Naive thymus-derived CD4-positive, alpha-beta T cell (primary cell): ENCODE measurements at regions of chr19 and their contacts with region 1.

Region 1: DNA sequence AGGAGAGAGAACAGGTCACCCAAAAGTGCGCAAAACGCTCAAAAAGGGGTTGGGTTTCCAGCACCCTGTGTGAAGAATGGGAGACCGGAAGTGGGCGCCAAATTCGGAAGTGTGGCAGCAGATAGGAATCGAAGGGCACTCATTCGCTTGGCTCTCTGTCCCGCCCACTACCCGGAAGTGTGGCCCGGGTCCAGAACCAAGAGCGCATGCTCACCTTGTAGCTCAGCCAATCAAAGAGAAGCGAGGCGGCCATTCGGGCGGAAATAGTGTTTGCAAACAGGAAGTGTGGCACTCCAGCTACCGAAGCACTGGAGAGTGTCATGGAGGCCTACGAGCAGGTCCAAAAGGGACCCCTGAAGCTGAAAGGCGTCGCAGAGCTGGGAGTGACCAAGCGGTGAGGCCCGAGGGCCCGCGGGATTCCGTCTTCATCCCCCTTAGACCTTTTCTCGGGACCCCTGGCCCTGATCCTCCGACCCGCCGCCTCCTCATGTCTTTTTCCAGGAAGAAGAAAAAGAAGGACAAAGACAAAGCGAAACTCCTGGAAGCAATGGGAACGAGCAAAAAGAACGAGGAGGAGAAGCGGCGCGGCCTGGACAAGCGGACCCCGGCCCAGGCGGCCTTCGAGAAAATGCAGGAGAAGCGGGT is at the start of gene FAM32A:
- DNase-seq: peak; percentile 91 to 99 (median 99)
- ATAC-seq: peak; percentile 96
- H3K4me3 ChIP-seq: peak within 1 kb of the TSS; percentile 97
- H3K4me3 Mint-ChIP-seq: peak within 1 kb of the TSS; percentile 90 to 100 (median 99)
- H3K27ac ChIP-seq: peak within 1 kb of the TSS; percentile 87
- H3K27ac Mint-ChIP-seq: peak within 1 kb of the TSS; percentile 94 to 100 (median 96)
- H3K4me1 ChIP-seq: peaks cover 13 to 16% of the 10 kb centered on the region in 2 donors
- H3K4me1 Mint-ChIP-seq: peaks cover 9 to 46% (median 36%) of the 10 kb centered on the region in 7 donors
- H3K27me3 ChIP-seq: peaks cover 0 to 4% of the 10 kb centered on the region in 2 donors
- H3K27me3 Mint-ChIP-seq: peaks cover 0 to 2% (median 0%) of the 10 kb centered on the region in 5 donors
- total RNA-seq, gene FAM32A: 45.9 to 69.4 (median 65.9) TPM

Region 2: GRCh38 chr19:15836595-15837337 is 348.5 kb before region 1 on chr19:
- CTCF ChIA-PET with region 1: no interaction called
- POLR2A ChIA-PET with region 1: interaction called, 6 read pairs
- intact Hi-C with region 1: loop called (anchors 1 kb)
- DNase-seq: peak; percentile 81 to 98 (median 97)
- ATAC-seq: peak; percentile 94
- H3K4me3 ChIP-seq: peak overlapping the region; percentile 60
- H3K4me3 Mint-ChIP-seq: peak overlapping the region; percentile 88 to 99 (median 95)
- H3K27ac ChIP-seq: peak overlapping the region; percentile 90
- H3K27ac Mint-ChIP-seq: peak overlapping the region in 7 of 9 donors; percentile 95 to 100 (median 98)
- H3K4me1 ChIP-seq: peaks cover 5 to 7% of the 10 kb centered on the region in 2 donors
- H3K4me1 Mint-ChIP-seq: peaks cover 18 to 28% (median 24%) of the 10 kb centered on the region in 7 donors
- H3K27me3 ChIP-seq: no peaks in the 10 kb centered on the region
- H3K27me3 Mint-ChIP-seq: no peaks in the 10 kb centered on the region

Region 3: DNA sequence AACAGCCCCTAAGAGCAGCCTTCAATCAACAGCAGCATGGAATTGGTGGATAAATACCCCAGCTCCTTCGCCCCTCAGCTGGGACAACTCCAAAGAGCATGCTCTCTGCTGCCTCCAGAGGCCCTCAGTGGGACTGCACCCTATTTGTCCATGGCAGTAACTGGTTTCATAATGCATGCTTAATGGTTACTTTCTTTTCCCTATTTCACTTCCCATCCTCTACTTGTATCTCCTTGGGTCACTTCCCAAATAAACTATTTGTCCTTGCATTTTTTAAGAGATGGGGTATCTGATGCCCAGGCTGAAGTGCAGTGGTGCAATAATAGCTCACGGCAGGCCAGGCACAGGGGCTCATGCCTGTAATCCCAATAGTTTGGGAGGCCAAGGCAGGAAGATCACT is 122.5 kb before region 1 on chr19:
- CTCF ChIA-PET with region 1: interaction called, 8 read pairs
- POLR2A ChIA-PET with region 1: no interaction called
- intact Hi-C with region 1: loop called (anchors 1 kb)
- DNase-seq: peak; percentile 32 to 77 (median 63)
- ATAC-seq: peak; percentile 89
- H3K4me3 ChIP-seq: no peak overlapping the region
- H3K4me3 Mint-ChIP-seq: peak overlapping the region in 1 of 10 donors; percentile 37
- H3K27ac ChIP-seq: no peak overlapping the region
- H3K27ac Mint-ChIP-seq: peak overlapping the region in 2 of 9 donors; percentile 3 to 24
- H3K4me1 ChIP-seq: peaks cover 0 to 4% of the 10 kb centered on the region in 2 donors
- H3K4me1 Mint-ChIP-seq: peaks cover 15 to 27% (median 21%) of the 10 kb centered on the region in 7 donors
- H3K27me3 ChIP-seq: no peaks in the 10 kb centered on the region
- H3K27me3 Mint-ChIP-seq: peaks cover 0 to 10% (median 0%) of the 10 kb centered on the region in 5 donors

Region 4: DNA sequence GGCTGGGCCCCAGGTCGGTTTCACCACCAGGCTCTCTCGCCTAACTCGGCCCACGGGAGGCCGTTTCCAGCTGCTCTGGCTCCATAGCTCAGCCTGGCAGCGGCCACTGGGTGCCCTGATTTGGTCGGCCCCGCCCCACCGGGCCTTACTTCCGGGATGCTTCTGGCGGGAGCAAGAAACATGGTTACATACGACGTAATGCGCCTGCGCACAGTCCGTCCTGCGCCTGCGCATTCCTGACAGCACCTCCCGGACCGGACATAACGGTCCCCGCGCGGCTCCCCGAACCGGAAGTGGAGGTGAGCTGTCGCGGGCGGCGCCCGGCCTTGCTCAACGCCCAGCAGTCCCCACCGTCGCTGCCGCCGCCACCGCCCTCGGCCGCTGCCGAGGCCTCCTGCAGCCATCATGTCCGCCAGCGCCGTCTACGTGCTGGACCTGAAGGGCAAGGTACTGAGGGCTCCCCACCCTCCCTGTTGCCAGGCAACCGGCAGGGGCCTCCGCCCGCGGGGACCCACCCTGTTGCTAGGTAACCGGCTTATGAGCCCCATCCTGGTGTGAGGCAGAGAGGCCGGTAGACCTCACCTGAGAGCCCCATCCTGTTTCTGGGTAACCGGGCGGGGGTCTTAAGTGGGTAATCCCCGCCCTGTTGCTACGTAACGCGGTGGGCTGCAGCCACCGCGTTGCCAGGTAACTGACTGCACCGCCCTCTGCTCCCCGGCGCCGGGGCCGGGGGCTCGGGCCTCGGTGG is 12.6 kb after region 1 on chr19 and contains the start of gene AP1M1:
- CTCF ChIA-PET with region 1: interaction called, 6 read pairs
- POLR2A ChIA-PET with region 1: interaction called, 7 read pairs
- intact Hi-C with region 1: loop called (anchors 1 kb)
- DNase-seq: peak; percentile 96 to 99 (median 97)
- ATAC-seq: peak; percentile 94
- H3K4me3 ChIP-seq: peak within 1 kb of the TSS; percentile 99
- H3K4me3 Mint-ChIP-seq: peak within 1 kb of the TSS; percentile 81 to 95 (median 90)
- H3K27ac ChIP-seq: peak within 1 kb of the TSS; percentile 95
- H3K27ac Mint-ChIP-seq: peak within 1 kb of the TSS; percentile 90 to 99 (median 97)
- H3K4me1 ChIP-seq: peaks cover 16 to 23% of the 10 kb centered on the region in 2 donors
- H3K4me1 Mint-ChIP-seq: peaks cover 38 to 49% (median 46%) of the 10 kb centered on the region in 7 donors
- H3K27me3 ChIP-seq: no peaks in the 10 kb centered on the region
- H3K27me3 Mint-ChIP-seq: no peaks in the 10 kb centered on the region
- total RNA-seq, gene AP1M1: 94.9 to 149 (median 125) TPM

Region 5: GRCh38 chr19:16371540-16371986 is 186.3 kb after region 1 on chr19:
- CTCF ChIA-PET with region 1: interaction called, 3 read pairs
- POLR2A ChIA-PET with region 1: interaction called, 13 read pairs
- intact Hi-C with region 1: no loop called
- DNase-seq: peak; percentile 73 to 97 (median 95)
- ATAC-seq: peak; percentile 72
- H3K4me3 ChIP-seq: peak overlapping the region; percentile 55
- H3K4me3 Mint-ChIP-seq: no peak overlapping the region
- H3K27ac ChIP-seq: peak overlapping the region; percentile 99
- H3K27ac Mint-ChIP-seq: no peak overlapping the region
- H3K4me1 ChIP-seq: peaks cover 89 to 94% of the 10 kb centered on the region in 2 donors
- H3K4me1 Mint-ChIP-seq: peaks cover 0 to 67% (median 53%) of the 10 kb centered on the region in 7 donors
- H3K27me3 ChIP-seq: no peaks in the 10 kb centered on the region
- H3K27me3 Mint-ChIP-seq: peaks cover 0 to 15% (median 0%) of the 10 kb centered on the region in 5 donors